MCF 10A (cell line): ENCODE measurements at regions of chr12 and their contacts with region 1.

Region 1: GRCh38 chr12:56029666-56030293 is 8.9 kb downstream of the IKZF4 start:
- DNase-seq: peak; percentile 69
- H3K4me3 Mint-ChIP-seq: no peak overlapping the region
- H3K27ac Mint-ChIP-seq: no peak overlapping the region
- H3K4me1 Mint-ChIP-seq: peaks cover 11% of the 10 kb centered on the region
- H3K27me3 Mint-ChIP-seq: no peaks in the 10 kb centered on the region
- CTCF ChIP-seq: peak; percentile 68

Region 2: DNA sequence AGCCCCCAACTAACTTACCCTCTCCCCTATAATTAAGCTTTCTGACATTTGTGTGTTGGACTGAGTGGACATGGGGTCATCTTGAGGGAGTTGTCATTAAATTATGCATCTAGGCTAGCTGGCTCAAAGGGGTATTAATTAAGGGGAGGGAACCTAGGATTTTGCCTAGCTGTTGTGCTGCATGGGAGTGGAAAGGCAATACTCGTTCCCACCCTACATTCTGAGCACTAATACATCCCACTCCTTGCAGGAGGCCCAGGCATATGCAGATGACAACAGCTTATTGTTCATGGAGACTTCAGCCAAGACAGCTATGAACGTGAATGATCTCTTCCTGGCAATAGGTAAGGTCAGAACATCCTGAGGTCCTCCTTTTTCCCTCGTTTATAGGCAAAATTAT is 38.7 kb before region 1 on chr12:
- CTCF ChIA-PET with region 1: interaction called, 39 read pairs
- POLR2A ChIA-PET with region 1: interaction called, 4 read pairs
- intact Hi-C with region 1: loop called (anchors 1 kb)
- DNase-seq: no peak
- H3K4me3 Mint-ChIP-seq: no peak overlapping the region
- H3K27ac Mint-ChIP-seq: no peak overlapping the region
- H3K4me1 Mint-ChIP-seq: peaks cover 4% of the 10 kb centered on the region
- H3K27me3 Mint-ChIP-seq: no peaks in the 10 kb centered on the region
- CTCF ChIP-seq: no peak

Region 3: DNA sequence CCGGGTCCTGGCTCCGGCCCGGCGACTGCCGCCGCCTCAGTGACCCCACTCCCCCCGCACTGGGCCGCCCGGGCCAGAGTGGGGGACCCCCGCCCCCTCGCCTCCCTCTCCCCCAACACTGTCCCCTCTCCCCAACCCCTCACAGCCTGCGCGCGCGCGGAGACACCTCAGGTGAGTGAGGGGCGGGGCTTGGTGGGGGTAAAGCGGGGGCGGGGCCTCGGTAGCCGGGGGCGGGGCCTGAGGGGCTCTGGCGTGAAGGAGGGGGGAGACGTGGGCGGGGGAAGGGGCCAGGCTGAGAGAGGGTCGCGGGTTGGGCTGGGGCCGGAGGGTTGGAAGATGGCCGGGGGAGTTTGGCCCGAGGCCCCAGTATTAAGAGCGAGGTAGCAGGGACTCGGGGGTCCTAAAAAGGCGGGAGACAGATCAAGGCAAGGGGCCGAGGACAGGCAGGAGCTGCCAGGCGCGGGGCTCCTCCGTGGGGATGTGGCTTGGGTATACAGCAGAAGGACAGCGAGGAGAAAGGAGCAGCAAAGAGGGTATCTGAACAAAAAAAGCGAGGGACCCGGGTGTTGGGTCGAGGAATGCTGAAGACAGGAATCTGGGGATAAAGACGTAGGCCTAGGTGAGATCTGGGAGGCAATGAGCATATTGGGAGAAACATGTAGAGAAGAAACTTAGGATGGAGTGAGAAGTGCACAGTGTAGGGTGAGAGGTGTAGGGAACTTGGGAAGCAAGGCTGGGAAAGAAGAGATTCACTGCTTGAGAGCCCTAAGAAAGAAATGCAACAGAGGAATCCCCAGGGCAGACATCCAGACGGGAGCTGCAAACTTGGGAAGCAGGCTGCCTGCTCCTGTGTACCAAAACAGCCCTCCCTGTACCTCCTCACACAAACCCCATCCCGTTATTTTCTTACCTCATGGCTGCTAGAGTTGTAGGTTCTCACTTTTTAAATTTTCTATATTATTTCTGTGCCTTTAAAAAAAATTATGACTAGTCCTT is 21.9 kb before region 1 on chr12:
- CTCF ChIA-PET with region 1: interaction called, 6 read pairs
- POLR2A ChIA-PET with region 1: interaction called, 15 read pairs
- intact Hi-C with region 1: no loop called
- DNase-seq: peak; percentile 43
- H3K4me3 Mint-ChIP-seq: peak overlapping the region; percentile 69
- H3K27ac Mint-ChIP-seq: peak overlapping the region; percentile 60
- H3K4me1 Mint-ChIP-seq: no peaks in the 10 kb centered on the region
- H3K27me3 Mint-ChIP-seq: no peaks in the 10 kb centered on the region
- CTCF ChIP-seq: no peak